Activated B cell treated with CpG ODN at 0.5 μM for 24 hours (primary cell): ENCODE measurements at regions of chr11 and their contacts with region 1.

Region 1: DNA sequence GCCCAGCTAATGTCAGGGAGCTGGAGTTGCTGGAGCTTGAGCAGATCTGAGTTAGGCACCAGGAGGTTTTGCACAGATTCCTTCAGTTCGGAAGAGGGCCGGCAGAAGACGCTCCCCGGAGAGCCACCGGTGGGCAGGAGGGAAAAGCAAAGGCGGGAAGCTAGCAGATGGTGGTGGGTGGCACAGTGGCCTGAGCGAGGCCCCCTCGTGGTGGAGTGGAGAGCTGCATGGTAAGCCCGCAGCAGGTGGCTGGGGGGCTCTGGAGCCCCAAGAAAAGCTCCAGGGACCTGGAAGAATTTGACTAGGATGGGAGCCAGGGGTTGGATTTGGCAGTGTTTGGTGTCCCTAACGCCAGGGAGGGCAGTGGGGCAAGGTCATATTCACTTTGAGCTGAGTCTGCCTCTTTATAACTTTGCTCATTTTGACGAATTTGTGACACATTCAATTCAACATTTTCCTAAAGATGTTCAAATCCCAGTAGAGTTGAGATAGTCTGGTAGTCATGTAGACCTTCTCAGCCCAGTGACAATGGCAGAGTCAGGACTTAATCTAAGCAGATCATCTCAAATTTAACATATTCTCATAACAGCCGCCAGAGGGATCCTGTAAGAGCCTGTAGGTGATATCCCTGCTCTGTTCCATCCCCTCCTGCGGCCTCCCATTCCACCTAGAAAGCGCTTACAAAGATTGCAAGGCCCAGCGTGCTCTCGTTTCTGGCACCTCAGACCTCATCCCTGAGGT is 58.0 kb downstream of the TRIM29 start:
- DNase-seq: no peak
- ATAC-seq: peak; percentile 45
- H3K4me3 Mint-ChIP-seq: no peak overlapping the region
- H3K27ac Mint-ChIP-seq: no peak overlapping the region
- H3K4me1 Mint-ChIP-seq: no peaks in the 10 kb centered on the region
- H3K27me3 Mint-ChIP-seq: peaks cover 15% of the 10 kb centered on the region
- CTCF ChIP-seq: no peak

Region 2: DNA sequence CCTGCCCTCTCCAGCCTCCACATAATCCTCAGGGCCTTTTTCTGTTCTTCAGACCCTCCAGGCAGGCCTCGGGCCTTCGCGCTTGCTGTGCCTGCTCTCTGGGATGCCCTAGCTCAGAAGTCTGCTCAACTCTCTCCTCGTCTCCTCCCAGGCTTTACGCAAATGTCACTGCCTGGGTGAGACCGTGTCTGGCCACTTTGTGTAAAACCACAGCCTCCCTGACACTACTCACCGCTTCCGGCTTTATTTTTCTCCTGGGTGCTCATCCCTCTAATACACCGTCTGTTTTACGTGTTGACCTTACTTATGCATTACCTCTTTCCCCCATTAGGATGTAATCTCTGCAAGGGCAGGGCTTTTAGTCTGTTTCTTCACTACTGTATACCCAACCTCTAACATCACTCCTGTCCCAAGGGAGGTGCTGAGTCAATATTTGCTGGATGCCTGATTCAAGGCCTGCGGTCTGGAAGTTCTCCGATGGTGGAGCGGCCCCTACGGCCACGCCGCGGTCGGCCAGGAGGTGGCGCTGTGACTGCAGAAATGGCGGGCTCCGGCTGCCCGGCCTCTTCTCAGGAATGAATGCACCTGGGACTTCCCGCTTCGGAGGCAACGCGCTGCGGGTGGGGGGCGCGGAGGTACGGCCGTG is 598.8 kb before region 1 on chr11:
- CTCF ChIA-PET with region 1: interaction called, 3 read pairs
- POLR2A ChIA-PET with region 1: no interaction called
- intact Hi-C with region 1: loop called (anchors 1 kb)
- DNase-seq: peak; percentile 70
- ATAC-seq: peak; percentile 79
- H3K4me3 Mint-ChIP-seq: no peak overlapping the region
- H3K27ac Mint-ChIP-seq: no peak overlapping the region
- H3K4me1 Mint-ChIP-seq: peaks cover 5% of the 10 kb centered on the region
- H3K27me3 Mint-ChIP-seq: peaks cover 40% of the 10 kb centered on the region
- CTCF ChIP-seq: no peak

Region 3: GRCh38 chr11:119641983-119642745 is 437.8 kb before region 1 on chr11:
- CTCF ChIA-PET with region 1: interaction called, 6 read pairs
- POLR2A ChIA-PET with region 1: no interaction called
- intact Hi-C with region 1: loop called (anchors 1 kb)
- DNase-seq: no peak
- ATAC-seq: no peak
- H3K4me3 Mint-ChIP-seq: no peak overlapping the region
- H3K27ac Mint-ChIP-seq: no peak overlapping the region
- H3K4me1 Mint-ChIP-seq: no peaks in the 10 kb centered on the region
- H3K27me3 Mint-ChIP-seq: peaks cover 6% of the 10 kb centered on the region
- CTCF ChIP-seq: no peak

Region 4: DNA sequence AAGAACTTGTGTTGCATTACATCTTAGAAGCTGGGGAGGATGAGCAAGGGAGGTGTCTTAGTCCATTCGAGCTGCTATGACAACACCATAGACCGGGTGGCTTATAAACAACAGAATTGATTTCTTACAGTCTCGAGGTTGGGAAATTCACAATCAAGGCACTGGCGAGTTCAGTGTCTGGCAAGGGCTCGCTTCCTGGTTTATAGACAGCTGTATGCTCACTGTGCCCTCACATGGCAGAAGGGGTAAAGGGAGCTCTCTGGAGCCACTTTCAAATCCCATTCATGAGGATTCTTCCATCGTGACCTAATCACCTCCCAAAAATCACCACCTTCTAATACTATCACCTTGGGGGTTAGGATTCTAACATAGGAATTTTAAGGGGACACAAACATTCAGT is 200.9 kb before region 1 on chr11:
- CTCF ChIA-PET with region 1: no interaction called
- POLR2A ChIA-PET with region 1: no interaction called
- intact Hi-C with region 1: no loop called
- DNase-seq: no peak
- ATAC-seq: no peak
- H3K4me3 Mint-ChIP-seq: no peak overlapping the region
- H3K27ac Mint-ChIP-seq: no peak overlapping the region
- H3K4me1 Mint-ChIP-seq: no peaks in the 10 kb centered on the region
- H3K27me3 Mint-ChIP-seq: peaks cover 6% of the 10 kb centered on the region
- CTCF ChIP-seq: no peak